ENCODE measurements at regions of chr7 and their contacts with region 1.

Region 1: DNA sequence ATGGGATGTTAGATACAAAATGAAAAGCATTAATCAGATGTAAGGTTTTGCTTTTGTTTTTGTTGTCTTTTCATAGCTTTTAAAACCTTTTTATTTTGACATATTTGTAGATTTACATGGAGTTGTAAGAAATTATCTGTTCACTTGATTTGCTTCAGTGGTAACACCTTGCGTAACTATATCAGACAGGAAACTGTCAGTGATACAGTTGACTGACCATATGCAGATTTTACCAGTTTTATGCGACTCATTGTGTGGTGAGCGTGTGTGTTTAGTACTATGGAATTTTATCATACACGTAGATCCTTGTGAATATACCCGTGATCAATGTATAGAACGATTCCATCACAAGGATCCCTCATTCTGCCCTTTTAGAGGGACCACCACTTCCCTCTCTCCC is 701.4 kb downstream of the SUGCT start:
- DNase-seq: peak; percentile 78
- H3K4me3 ChIP-seq: peak overlapping the region; percentile 25
- H3K27ac ChIP-seq: peak overlapping the region; percentile 70
- H3K4me1 ChIP-seq: peaks cover 59% of the 10 kb centered on the region
- CTCF ChIP-seq: no peak

Region 2: DNA sequence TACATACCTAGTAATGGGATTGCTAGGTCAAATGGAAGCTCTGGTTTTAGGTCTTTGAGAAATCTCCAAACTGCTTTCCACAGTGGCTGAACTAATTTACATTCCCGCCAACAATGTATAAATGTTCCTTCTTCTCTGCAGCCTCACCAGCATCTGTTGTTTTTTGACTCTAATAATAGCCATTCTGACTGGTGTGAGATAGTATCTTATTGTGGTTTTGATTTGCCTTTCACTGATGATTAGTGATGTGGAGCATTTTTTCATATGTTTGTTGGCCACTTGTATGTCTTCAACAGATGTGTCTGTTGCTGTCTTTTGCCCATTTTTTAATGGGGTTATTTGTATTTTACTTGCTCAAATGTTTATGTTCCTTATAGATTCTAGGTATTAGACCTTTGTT is 25.9 kb before region 1 on chr7:
- CTCF ChIA-PET with region 1: no interaction called
- POLR2A ChIA-PET with region 1: interaction called, 3 read pairs
- intact Hi-C with region 1: loop called (anchors 2 kb)
- DNase-seq: peak; percentile 84
- H3K4me3 ChIP-seq: peak overlapping the region; percentile 46
- H3K27ac ChIP-seq: peak overlapping the region; percentile 95
- H3K4me1 ChIP-seq: peaks cover 81% of the 10 kb centered on the region
- CTCF ChIP-seq: no peak

Measured in OCI-LY7 (cell line).